ENCODE measurements at regions of chr3 and their contacts with region 1.

Region 1: GRCh38 chr3:194134757-194135528 is 1.0 kb upstream of the HES1 start:
- DNase-seq: peak; percentile 96
- ATAC-seq: peak; percentile 37
- H3K4me3 ChIP-seq: peak overlapping the region; percentile 48 to 80 (median 72)
- H3K4me3 Mint-ChIP-seq: peak overlapping the region; percentile 94
- H3K27ac ChIP-seq: peak overlapping the region; percentile 88 to 94
- H3K27ac Mint-ChIP-seq: peak overlapping the region; percentile 99
- H3K4me1 ChIP-seq: peaks cover 66 to 83% of the 10 kb centered on the region in 2 donors
- H3K4me1 Mint-ChIP-seq: peaks cover 72% of the 10 kb centered on the region
- H3K27me3 ChIP-seq: no peaks in the 10 kb centered on the region
- H3K27me3 Mint-ChIP-seq: peaks cover 4% of the 10 kb centered on the region
- CTCF ChIP-seq: no peak

Region 2: GRCh38 chr3:193592944-193593667 is 541.8 kb before region 1 on chr3 and contains the start of gene OPA1:
- CTCF ChIA-PET with region 1: no interaction called
- POLR2A ChIA-PET with region 1: no interaction called
- intact Hi-C with region 1: loop called (anchors 2 kb)
- DNase-seq: peak; percentile 92
- ATAC-seq: peak; percentile 98
- H3K4me3 ChIP-seq: peak within 1 kb of the TSS; percentile 64 to 97 (median 94)
- H3K4me3 Mint-ChIP-seq: peak within 1 kb of the TSS; percentile 88
- H3K27ac ChIP-seq: peak within 1 kb of the TSS; percentile 74 to 92
- H3K27ac Mint-ChIP-seq: peak within 1 kb of the TSS; percentile 81
- H3K4me1 ChIP-seq: peaks cover 20 to 23% of the 10 kb centered on the region in 2 donors
- H3K4me1 Mint-ChIP-seq: peaks cover 48% of the 10 kb centered on the region
- H3K27me3 ChIP-seq: no peaks in the 10 kb centered on the region
- H3K27me3 Mint-ChIP-seq: no peaks in the 10 kb centered on the region
- CTCF ChIP-seq: no peak
- total RNA-seq, gene OPA1: 60.3 and 62.8 TPM in 2 replicates

Region 3: GRCh38 chr3:193780810-193781472 is 354.0 kb before region 1 on chr3:
- CTCF ChIA-PET with region 1: interaction called, 92 read pairs
- POLR2A ChIA-PET with region 1: interaction called, 7 read pairs
- intact Hi-C with region 1: loop called (anchors 2 kb)
- DNase-seq: peak; percentile 63
- ATAC-seq: peak; percentile 45
- H3K4me3 ChIP-seq: no peak overlapping the region
- H3K4me3 Mint-ChIP-seq: no peak overlapping the region
- H3K27ac ChIP-seq: no peak overlapping the region
- H3K27ac Mint-ChIP-seq: no peak overlapping the region
- H3K4me1 ChIP-seq: peaks cover 12% of the 10 kb centered on the region in 2 donors
- H3K4me1 Mint-ChIP-seq: peaks cover 12% of the 10 kb centered on the region
- H3K27me3 ChIP-seq: peaks cover 0 to 61% (median 28%) of the 10 kb centered on the region in 4 experiments
- H3K27me3 Mint-ChIP-seq: peaks cover 59% of the 10 kb centered on the region
- CTCF ChIP-seq: peak; percentile 59

Region 4: DNA sequence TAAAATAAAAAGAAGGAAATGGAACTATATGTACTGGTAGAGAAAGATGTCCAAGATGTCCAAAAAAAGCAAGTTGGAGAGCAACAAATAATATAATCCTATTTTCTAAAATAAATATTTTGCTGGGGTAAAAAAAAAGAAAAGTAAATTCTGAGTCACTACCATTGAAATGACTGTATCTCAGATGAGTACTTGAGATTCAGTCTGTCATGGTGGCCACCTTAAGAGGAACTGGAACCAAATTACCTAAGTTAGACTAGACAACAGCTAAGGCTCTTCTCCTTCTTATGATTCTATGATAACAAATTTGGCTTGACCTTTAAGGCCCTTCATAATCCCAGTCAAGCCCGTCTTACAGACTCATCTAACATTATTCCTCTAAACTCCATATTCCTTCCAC is 269.6 kb before region 1 on chr3:
- CTCF ChIA-PET with region 1: interaction called, 4 read pairs
- POLR2A ChIA-PET with region 1: interaction called, 8 read pairs
- intact Hi-C with region 1: loop called (anchors 2 kb)
- DNase-seq: peak; percentile 59
- ATAC-seq: peak; percentile 80
- H3K4me3 ChIP-seq: no peak overlapping the region
- H3K4me3 Mint-ChIP-seq: peak overlapping the region; percentile 74
- H3K27ac ChIP-seq: no peak overlapping the region
- H3K27ac Mint-ChIP-seq: peak overlapping the region; percentile 68
- H3K4me1 ChIP-seq: peaks cover 57 to 60% of the 10 kb centered on the region in 2 donors
- H3K4me1 Mint-ChIP-seq: peaks cover 59% of the 10 kb centered on the region
- H3K27me3 ChIP-seq: peaks cover 0 to 3% (median 0%) of the 10 kb centered on the region in 4 experiments
- H3K27me3 Mint-ChIP-seq: no peaks in the 10 kb centered on the region
- CTCF ChIP-seq: no peak

Region 5: DNA sequence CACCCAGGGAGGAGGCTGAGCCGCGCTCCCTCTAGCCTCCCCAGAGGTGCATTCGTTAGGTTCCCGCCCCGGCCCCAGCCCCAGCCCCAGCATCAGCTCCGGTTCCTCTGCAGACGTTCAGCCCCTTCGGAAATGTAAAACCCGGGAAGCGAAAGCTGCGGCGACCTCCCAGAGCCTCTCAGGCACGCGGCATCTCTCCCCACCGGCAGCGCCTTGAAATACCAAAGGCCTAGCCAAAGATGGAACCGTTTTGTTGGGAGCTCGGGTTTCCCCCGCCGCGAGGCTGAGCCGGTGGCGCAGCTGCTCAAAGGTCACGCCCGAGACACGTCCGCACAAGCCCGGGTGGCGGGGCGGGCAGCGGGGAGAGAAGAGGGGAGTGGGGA is 76.8 kb before region 1 on chr3:
- CTCF ChIA-PET with region 1: interaction called, 24 read pairs
- POLR2A ChIA-PET with region 1: interaction called, 4 read pairs
- intact Hi-C with region 1: no loop called
- DNase-seq: peak; percentile 62
- ATAC-seq: peak; percentile 79
- H3K4me3 ChIP-seq: peak overlapping the region in 4 of 5 experiments; percentile 29 to 59 (median 53)
- H3K4me3 Mint-ChIP-seq: peak overlapping the region; percentile 77
- H3K27ac ChIP-seq: no peak overlapping the region
- H3K27ac Mint-ChIP-seq: peak overlapping the region; percentile 7
- H3K4me1 ChIP-seq: peaks cover 15 to 20% of the 10 kb centered on the region in 2 donors
- H3K4me1 Mint-ChIP-seq: peaks cover 18% of the 10 kb centered on the region
- H3K27me3 ChIP-seq: no peaks in the 10 kb centered on the region
- H3K27me3 Mint-ChIP-seq: no peaks in the 10 kb centered on the region
- CTCF ChIP-seq: no peak

Region 6: DNA sequence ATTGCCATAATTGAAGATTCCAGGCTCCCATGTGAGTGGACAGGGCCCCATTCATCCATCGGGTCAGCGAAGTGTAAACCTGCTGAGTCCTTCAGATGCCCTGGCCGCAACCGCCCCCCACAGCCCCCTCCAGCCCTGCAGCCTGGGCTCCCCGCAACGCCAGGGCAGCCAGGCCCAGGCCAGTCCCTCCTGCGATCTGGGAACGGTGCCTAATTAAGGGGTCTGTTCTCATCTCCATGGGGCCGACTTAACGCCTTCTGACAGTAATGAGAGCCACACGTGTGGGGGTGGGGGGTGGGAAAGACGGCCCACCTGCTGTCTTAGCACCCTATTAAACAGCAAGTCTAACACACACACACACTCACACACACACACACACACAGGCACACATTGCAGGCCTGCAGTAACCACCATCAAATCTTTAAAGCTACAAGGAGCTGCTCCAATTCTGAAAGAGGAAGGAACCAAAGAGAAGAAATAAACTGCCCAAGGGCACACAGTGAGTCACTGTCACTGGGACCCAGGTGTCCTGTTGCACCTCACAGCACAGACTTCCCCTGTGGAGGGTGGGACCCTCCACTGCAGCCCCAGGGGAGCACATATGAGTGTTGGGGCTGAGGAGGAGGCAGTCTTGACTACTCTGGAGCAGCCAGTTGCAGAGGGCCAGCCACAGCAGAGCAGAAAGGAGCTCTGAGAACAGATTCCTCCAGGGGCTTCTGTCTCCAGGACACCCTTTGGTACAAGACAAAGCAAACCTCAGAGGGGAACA is 30.8 kb before region 1 on chr3:
- CTCF ChIA-PET with region 1: interaction called, 148 read pairs
- POLR2A ChIA-PET with region 1: interaction called, 27 read pairs
- intact Hi-C with region 1: loop called (anchors 1 kb)
- DNase-seq: peak; percentile 94
- ATAC-seq: peak; percentile 88
- H3K4me3 ChIP-seq: peak overlapping the region; percentile 10 to 63 (median 42)
- H3K4me3 Mint-ChIP-seq: peak overlapping the region; percentile 81
- H3K27ac ChIP-seq: peak overlapping the region; percentile 93 to 97
- H3K27ac Mint-ChIP-seq: peak overlapping the region; percentile 81
- H3K4me1 ChIP-seq: peaks cover 85 to 93% of the 10 kb centered on the region in 2 donors
- H3K4me1 Mint-ChIP-seq: peaks cover 88% of the 10 kb centered on the region
- H3K27me3 ChIP-seq: no peaks in the 10 kb centered on the region
- H3K27me3 Mint-ChIP-seq: no peaks in the 10 kb centered on the region
- CTCF ChIP-seq: no peak

Region 7: DNA sequence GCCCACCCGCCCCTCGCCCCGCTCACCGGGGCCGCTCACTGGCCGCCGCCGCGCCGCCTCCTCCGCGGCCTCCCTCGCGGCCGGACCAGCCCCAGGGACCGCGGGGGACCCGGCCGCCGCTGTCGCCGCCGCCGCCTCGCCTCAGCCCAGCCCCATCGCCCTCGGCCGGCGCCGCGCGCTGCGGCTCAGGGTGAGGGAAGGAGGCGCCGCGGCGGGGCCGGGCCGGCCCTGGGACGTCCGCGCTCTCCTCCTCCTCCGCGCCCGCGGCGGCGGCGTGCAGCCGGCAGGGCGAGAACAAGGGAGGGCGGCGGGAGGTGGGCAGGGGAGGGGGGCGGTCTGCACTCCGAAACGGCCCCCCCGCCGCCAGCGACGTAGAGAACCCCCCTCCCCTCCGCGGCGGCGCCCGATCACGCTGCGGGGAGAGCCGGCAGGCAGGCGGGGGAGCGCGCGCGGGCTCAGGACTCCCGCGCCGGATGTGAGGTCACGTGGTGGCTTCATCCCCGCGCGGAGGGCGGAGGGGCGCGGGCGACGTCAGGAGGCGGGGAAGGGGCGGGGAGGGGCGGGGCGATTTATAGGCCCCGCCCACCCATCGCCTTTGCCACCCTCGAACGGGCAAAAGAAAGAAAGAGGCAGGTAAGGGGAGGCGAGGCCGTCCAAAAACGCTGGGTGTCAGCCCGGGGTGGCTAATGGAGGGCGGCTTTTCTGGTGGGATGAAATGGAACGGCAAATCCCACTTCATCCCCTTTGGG is 351.8 kb after region 1 on chr3 and contains the start of gene ATP13A3:
- CTCF ChIA-PET with region 1: no interaction called
- POLR2A ChIA-PET with region 1: no interaction called
- intact Hi-C with region 1: loop called (anchors 5 kb)
- DNase-seq: peak; percentile 95
- ATAC-seq: peak; percentile 81
- H3K4me3 ChIP-seq: peak within 1 kb of the TSS; percentile 63 to 92 (median 77)
- H3K4me3 Mint-ChIP-seq: peak within 1 kb of the TSS; percentile 93
- H3K27ac ChIP-seq: peak within 1 kb of the TSS; percentile 66 to 71
- H3K27ac Mint-ChIP-seq: peak within 1 kb of the TSS; percentile 92
- H3K4me1 ChIP-seq: peaks cover 32 to 50% of the 10 kb centered on the region in 2 donors
- H3K4me1 Mint-ChIP-seq: peaks cover 55% of the 10 kb centered on the region
- H3K27me3 ChIP-seq: no peaks in the 10 kb centered on the region
- H3K27me3 Mint-ChIP-seq: no peaks in the 10 kb centered on the region
- CTCF ChIP-seq: peak; percentile 5
- total RNA-seq, gene ATP13A3: 61.0 and 61.1 TPM in 2 replicates

Measured in B cell (primary cell).